Activated CD8-positive, alpha-beta T cell treated with anti-CD3 and anti-CD28 coated beads, Interleukin-2, amount 10 ng/mL, durations not matched to agents 7 days and 5 days (primary cell): ENCODE measurements at regions of chr7 and their contacts with region 1.

Region 1: GRCh38 chr7:158976849-158977593 is 120.7 kb downstream of the DYNC2I1 start:
- DNase-seq: peak; percentile 93
- ATAC-seq: peak; percentile 88
- H3K4me3 Mint-ChIP-seq: peak overlapping the region; percentile 70
- H3K27ac Mint-ChIP-seq: peak overlapping the region; percentile 84
- H3K4me1 Mint-ChIP-seq: peaks cover 20% of the 10 kb centered on the region
- H3K27me3 Mint-ChIP-seq: no peaks in the 10 kb centered on the region

Region 2: GRCh38 chr7:158704704-158705468 is 272.1 kb before region 1 on chr7 and contains the start of gene NCAPG2:
- CTCF ChIA-PET with region 1: interaction called, 14 read pairs
- POLR2A ChIA-PET with region 1: no interaction called
- DNase-seq: peak; percentile 98
- ATAC-seq: peak; percentile 97
- H3K4me3 Mint-ChIP-seq: peak within 1 kb of the TSS; percentile 83
- H3K27ac Mint-ChIP-seq: peak within 1 kb of the TSS; percentile 94
- H3K4me1 Mint-ChIP-seq: peaks cover 49% of the 10 kb centered on the region
- H3K27me3 Mint-ChIP-seq: no peaks in the 10 kb centered on the region
- total RNA-seq, gene NCAPG2: 154 TPM

Region 3: DNA sequence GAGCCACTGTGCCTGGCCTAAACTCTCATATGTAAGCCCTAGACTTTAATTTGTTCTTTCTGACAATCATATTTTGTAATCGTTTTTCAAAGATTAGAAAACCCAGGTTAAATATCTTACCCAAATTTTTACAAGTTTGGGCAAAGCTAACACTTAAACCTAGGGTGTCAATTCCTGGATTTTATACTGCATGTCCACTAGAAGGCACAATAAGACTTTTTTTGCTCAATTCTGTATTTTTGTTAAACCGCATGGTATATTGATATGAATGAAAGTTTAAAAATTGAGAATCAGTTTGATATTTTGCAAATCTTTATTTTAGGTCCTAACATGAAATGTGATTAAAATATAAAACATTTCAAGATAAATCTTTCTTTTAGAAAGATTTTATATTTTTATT is 91.4 kb before region 1 on chr7:
- CTCF ChIA-PET with region 1: interaction called, 32 read pairs
- POLR2A ChIA-PET with region 1: no interaction called
- DNase-seq: no peak
- ATAC-seq: peak; percentile 58
- H3K4me3 Mint-ChIP-seq: no peak overlapping the region
- H3K27ac Mint-ChIP-seq: no peak overlapping the region
- H3K4me1 Mint-ChIP-seq: no peaks in the 10 kb centered on the region
- H3K27me3 Mint-ChIP-seq: no peaks in the 10 kb centered on the region

Region 4: DNA sequence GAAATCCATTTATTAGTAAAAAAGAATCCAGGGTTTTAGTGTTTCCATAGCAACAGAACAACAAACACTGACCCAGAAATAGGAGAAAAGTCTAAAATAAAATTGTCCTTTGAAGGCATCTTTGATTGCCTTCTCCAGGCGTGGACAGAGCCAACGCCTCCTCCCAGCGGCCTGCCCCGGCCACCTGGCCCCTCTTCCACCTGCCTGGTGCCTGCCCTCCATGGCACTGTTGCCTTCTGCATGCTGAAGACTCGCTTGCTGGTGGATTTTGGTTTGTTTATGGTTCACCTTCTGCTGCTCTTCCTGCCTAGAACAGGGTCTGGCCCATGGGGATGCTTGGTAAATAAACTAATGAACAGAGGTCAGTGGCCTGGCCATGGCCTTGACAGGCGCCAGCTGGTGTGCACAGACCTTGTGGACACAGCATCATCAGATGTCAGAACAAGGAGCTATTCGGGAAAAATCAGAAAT is 13.2 kb before region 1 on chr7:
- CTCF ChIA-PET with region 1: interaction called, 22 read pairs
- POLR2A ChIA-PET with region 1: no interaction called
- DNase-seq: no peak
- ATAC-seq: no peak
- H3K4me3 Mint-ChIP-seq: no peak overlapping the region
- H3K27ac Mint-ChIP-seq: no peak overlapping the region
- H3K4me1 Mint-ChIP-seq: no peaks in the 10 kb centered on the region
- H3K27me3 Mint-ChIP-seq: peaks cover 2% of the 10 kb centered on the region